Naive thymus-derived CD4-positive, alpha-beta T cell (primary cell): ENCODE measurements at regions of chr11 and their contacts with region 1.

Region 1: GRCh38 chr11:82978422-82979099 is 77.0 kb downstream of the DDIAS start:
- DNase-seq: no peak
- ATAC-seq: no peak
- H3K4me3 ChIP-seq: no peak overlapping the region
- H3K4me3 Mint-ChIP-seq: peak overlapping the region in 3 of 10 donors; percentile 7 to 18 (median 13)
- H3K27ac ChIP-seq: no peak overlapping the region
- H3K27ac Mint-ChIP-seq: peak overlapping the region in 5 of 9 donors; percentile 1 to 59 (median 33)
- H3K4me1 ChIP-seq: peaks cover 0 to 5% of the 10 kb centered on the region in 2 donors
- H3K4me1 Mint-ChIP-seq: peaks cover 2 to 31% (median 23%) of the 10 kb centered on the region in 7 donors
- H3K27me3 ChIP-seq: no peaks in the 10 kb centered on the region
- H3K27me3 Mint-ChIP-seq: peaks cover 0 to 5% (median 0%) of the 10 kb centered on the region in 5 donors

Region 2: GRCh38 chr11:82995754-82996404 is 17.3 kb after region 1 on chr11:
- CTCF ChIA-PET with region 1: interaction called, 4 read pairs
- POLR2A ChIA-PET with region 1: interaction called, 3 read pairs
- intact Hi-C with region 1: loop called in 1 of 2 experiments (anchors 2 kb)
- DNase-seq: peak in 1 of 9 donors; percentile 40
- ATAC-seq: no peak
- H3K4me3 ChIP-seq: no peak overlapping the region
- H3K4me3 Mint-ChIP-seq: no peak overlapping the region
- H3K27ac ChIP-seq: no peak overlapping the region
- H3K27ac Mint-ChIP-seq: peak overlapping the region in 1 of 9 donors; percentile 58
- H3K4me1 ChIP-seq: no peaks in the 10 kb centered on the region
- H3K4me1 Mint-ChIP-seq: peaks cover 12 to 38% (median 22%) of the 10 kb centered on the region in 7 donors
- H3K27me3 ChIP-seq: no peaks in the 10 kb centered on the region
- H3K27me3 Mint-ChIP-seq: no peaks in the 10 kb centered on the region

Region 3: GRCh38 chr11:83007909-83008580 is 29.5 kb after region 1 on chr11:
- CTCF ChIA-PET with region 1: no interaction called
- POLR2A ChIA-PET with region 1: no interaction called
- intact Hi-C with region 1: no loop called
- DNase-seq: no peak
- ATAC-seq: peak; percentile 29
- H3K4me3 ChIP-seq: no peak overlapping the region
- H3K4me3 Mint-ChIP-seq: peak overlapping the region in 6 of 10 donors; percentile 6 to 52 (median 27)
- H3K27ac ChIP-seq: no peak overlapping the region
- H3K27ac Mint-ChIP-seq: peak overlapping the region in 5 of 9 donors; percentile 6 to 49 (median 42)
- H3K4me1 ChIP-seq: peaks cover 0 to 8% of the 10 kb centered on the region in 2 donors
- H3K4me1 Mint-ChIP-seq: peaks cover 13 to 49% (median 38%) of the 10 kb centered on the region in 7 donors
- H3K27me3 ChIP-seq: no peaks in the 10 kb centered on the region
- H3K27me3 Mint-ChIP-seq: no peaks in the 10 kb centered on the region